ENCODE measurements at regions of chr11 and their contacts with region 1.

Region 1: DNA sequence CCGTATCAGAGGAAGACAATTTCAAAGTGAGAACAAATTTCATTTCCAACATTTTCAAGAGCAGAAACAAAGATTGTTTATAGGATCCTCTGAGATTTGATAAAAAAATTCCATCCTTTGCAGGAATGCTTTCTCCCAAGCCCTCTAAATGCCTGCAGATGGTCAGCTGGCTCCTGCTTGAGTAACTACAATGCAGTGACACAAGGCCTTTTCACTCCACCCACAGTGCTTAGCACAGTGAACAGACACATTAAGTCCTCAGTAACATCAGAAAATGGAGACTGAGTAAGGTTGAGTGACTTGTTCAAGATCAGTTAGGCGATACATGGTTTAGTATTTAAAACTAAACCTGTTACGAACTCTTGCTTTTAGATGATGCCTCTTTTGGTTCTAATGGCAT is 527.1 kb upstream of the CCDC90B start:
- DNase-seq: no peak
- ATAC-seq: no peak
- H3K4me3 ChIP-seq: no peak overlapping the region
- H3K27ac ChIP-seq: no peak overlapping the region
- H3K4me1 ChIP-seq: no peaks in the 10 kb centered on the region
- H3K27me3 ChIP-seq: no peaks in the 10 kb centered on the region
- CTCF ChIP-seq: no peak
- POLR2A ChIP-seq: no peak

Region 2: DNA sequence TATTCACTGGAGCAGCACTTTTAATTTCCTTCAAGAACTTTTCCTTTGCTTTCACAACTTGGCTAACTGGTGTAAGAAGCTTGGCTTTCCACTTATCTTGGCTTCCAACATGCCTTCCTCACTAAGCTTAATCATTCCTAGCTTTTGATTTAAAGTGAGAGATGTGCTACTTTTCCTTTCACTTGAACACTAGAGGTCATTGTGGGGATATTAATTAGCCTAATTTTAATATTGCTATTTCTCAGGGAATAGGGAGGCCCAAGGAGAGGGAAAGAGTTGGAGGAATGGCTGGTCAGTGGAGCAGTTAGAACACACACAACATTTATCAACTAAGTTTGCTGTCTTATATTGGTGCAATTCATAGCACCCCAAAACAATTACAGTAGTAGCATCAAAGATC is 502.6 kb before region 1 on chr11:
- intact Hi-C with region 1: loop called in 1 of 10 experiments (anchors 5 kb)
- DNase-seq: no peak
- ATAC-seq: no peak
- H3K4me3 ChIP-seq: no peak overlapping the region
- H3K27ac ChIP-seq: no peak overlapping the region
- H3K4me1 ChIP-seq: no peaks in the 10 kb centered on the region
- H3K27me3 ChIP-seq: no peaks in the 10 kb centered on the region
- CTCF ChIP-seq: no peak
- POLR2A ChIP-seq: no peak

Region 3: GRCh38 chr11:84071851-84072250 is 258.6 kb after region 1 on chr11:
- intact Hi-C with region 1: no loop called
- DNase-seq: no peak
- ATAC-seq: no peak
- H3K4me3 ChIP-seq: no peak overlapping the region
- H3K27ac ChIP-seq: no peak overlapping the region
- H3K4me1 ChIP-seq: no peaks in the 10 kb centered on the region
- H3K27me3 ChIP-seq: no peaks in the 10 kb centered on the region
- CTCF ChIP-seq: no peak
- POLR2A ChIP-seq: no peak

Region 4: GRCh38 chr11:85385547-85385946 is 1572.3 kb after region 1 on chr11:
- intact Hi-C with region 1: no loop called
- DNase-seq: no peak
- ATAC-seq: no peak
- H3K4me3 ChIP-seq: no peak overlapping the region
- H3K27ac ChIP-seq: no peak overlapping the region
- H3K4me1 ChIP-seq: no peaks in the 10 kb centered on the region
- H3K27me3 ChIP-seq: no peaks in the 10 kb centered on the region
- CTCF ChIP-seq: no peak
- POLR2A ChIP-seq: no peak